B cell (primary cell): ENCODE measurements at regions of chr1 and their contacts with region 1.

Region 1: GRCh38 chr1:111639602-111640198 is 20.1 kb downstream of the RAP1A start:
- DNase-seq: no peak
- ATAC-seq: no peak
- H3K4me3 ChIP-seq: no peak overlapping the region
- H3K4me3 Mint-ChIP-seq: no peak overlapping the region
- H3K27ac ChIP-seq: no peak overlapping the region
- H3K27ac Mint-ChIP-seq: no peak overlapping the region
- H3K4me1 ChIP-seq: peaks cover 14 to 40% of the 10 kb centered on the region in 2 donors
- H3K4me1 Mint-ChIP-seq: peaks cover 61% of the 10 kb centered on the region
- H3K27me3 ChIP-seq: no peaks in the 10 kb centered on the region
- H3K27me3 Mint-ChIP-seq: no peaks in the 10 kb centered on the region
- CTCF ChIP-seq: no peak

Region 2: DNA sequence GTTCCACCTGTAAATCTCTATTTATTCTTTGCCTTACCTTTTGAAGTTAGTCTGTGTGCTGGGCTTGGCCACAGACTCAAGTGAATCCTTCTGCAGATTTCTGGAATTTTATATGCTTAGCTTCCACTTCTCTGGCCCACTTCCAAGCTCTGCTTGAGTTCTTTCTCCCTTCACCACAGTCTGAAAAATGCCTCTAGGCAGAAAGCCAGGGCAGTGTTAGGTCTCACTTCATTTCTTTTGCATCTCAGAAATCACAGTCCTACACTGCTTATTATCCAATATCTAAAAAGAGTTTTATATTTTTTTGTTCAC is 50.6 kb after region 1 on chr1:
- CTCF ChIA-PET with region 1: interaction called, 3 read pairs
- POLR2A ChIA-PET with region 1: interaction called, 10 read pairs
- intact Hi-C with region 1: no loop called
- DNase-seq: no peak
- ATAC-seq: no peak
- H3K4me3 ChIP-seq: no peak overlapping the region
- H3K4me3 Mint-ChIP-seq: no peak overlapping the region
- H3K27ac ChIP-seq: peak overlapping the region; percentile 15 to 71
- H3K27ac Mint-ChIP-seq: peak overlapping the region; percentile 54
- H3K4me1 ChIP-seq: peaks cover 16 to 20% of the 10 kb centered on the region in 2 donors
- H3K4me1 Mint-ChIP-seq: peaks cover 59% of the 10 kb centered on the region
- H3K27me3 ChIP-seq: no peaks in the 10 kb centered on the region
- H3K27me3 Mint-ChIP-seq: no peaks in the 10 kb centered on the region
- CTCF ChIP-seq: no peak